ENCODE measurements at regions of chr5 and their contacts with region 1.

Region 1: DNA sequence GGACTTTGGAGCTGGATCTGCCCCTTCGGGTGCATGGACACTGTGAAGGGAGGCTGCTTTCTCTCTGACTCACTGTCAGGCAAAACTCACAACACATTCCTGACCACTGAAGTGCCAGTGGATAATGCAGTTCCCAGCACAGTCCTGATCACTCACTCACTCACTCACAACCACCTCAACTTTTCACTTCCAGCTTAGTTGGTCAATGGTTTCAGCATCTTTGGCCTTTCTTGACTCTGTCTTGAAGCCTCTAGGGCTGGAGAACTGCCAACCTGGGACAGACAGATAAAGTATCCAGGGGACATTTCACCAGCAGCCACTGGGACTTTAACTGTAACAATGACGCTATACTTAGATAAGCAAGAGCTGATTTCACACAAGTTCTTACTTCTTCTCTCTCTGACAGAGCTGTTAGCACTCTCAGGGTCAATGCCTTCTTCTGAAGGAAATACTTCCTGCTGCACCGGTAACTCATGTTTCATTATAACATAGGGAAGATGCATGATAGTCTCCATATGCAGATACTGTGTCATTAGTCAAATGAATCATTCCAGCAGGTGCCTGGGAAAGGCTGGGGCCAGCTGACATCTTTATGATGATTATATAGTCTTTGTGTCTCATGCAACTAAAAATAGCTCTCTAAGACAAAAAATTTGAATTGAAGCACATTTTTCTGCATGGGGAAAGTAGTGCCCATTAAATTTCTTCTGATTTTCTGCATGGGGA is 499.0 kb downstream of the SEMA5A start:
- DNase-seq: peak; percentile 98
- H3K4me3 ChIP-seq: no peak overlapping the region
- H3K27ac ChIP-seq: peak overlapping the region; percentile 82
- H3K4me1 ChIP-seq: peaks cover 24% of the 10 kb centered on the region
- H3K27me3 ChIP-seq: no peaks in the 10 kb centered on the region
- CTCF ChIP-seq: no peak

Region 2: GRCh38 chr5:9149988-9150387 is 103.1 kb after region 1 on chr5:
- CTCF ChIA-PET with region 1: no interaction called
- dilution Hi-C with region 1: no loop called
- in situ Hi-C with region 1: no loop called
- intact Hi-C with region 1: loop called (anchors 5 kb)
- DNase-seq: peak; percentile 99
- H3K4me3 ChIP-seq: no peak overlapping the region
- H3K27ac ChIP-seq: peak overlapping the region; percentile 79
- H3K4me1 ChIP-seq: peaks cover 27% of the 10 kb centered on the region
- H3K27me3 ChIP-seq: no peaks in the 10 kb centered on the region
- CTCF ChIP-seq: no peak

Measured in mammary epithelial cell (primary cell).